H1 (cell line): ENCODE measurements at regions of chr1 and their contacts with region 1.

Region 1: GRCh38 chr1:232496175-232496574 is 133.8 kb downstream of the SIPA1L2 start:
- DNase-seq: no peak
- H3K4me3 ChIP-seq: no peak overlapping the region
- H3K27ac ChIP-seq: no peak overlapping the region
- H3K4me1 ChIP-seq: no peaks in the 10 kb centered on the region
- H3K27me3 ChIP-seq: no peaks in the 10 kb centered on the region
- CTCF ChIP-seq: no peak
- EP300 ChIP-seq: no peak
- POLR2A ChIP-seq: no peak
- RAD21 ChIP-seq: no peak

Region 2: GRCh38 chr1:232508130-232508701 is 12.0 kb after region 1 on chr1:
- CTCF ChIA-PET with region 1: interaction called, 23 read pairs
- POLR2A ChIA-PET with region 1: no interaction called
- DNase-seq: no peak
- H3K4me3 ChIP-seq: no peak overlapping the region
- H3K27ac ChIP-seq: no peak overlapping the region
- H3K4me1 ChIP-seq: peaks cover 0 to 6% (median 4%) of the 10 kb centered on the region in 4 experiments; a peak in 4 of 7 replicates
- H3K27me3 ChIP-seq: no peaks in the 10 kb centered on the region
- CTCF ChIP-seq: peak in 2 of 3 experiments; percentile 37 to 40; a peak in 3 of 4 replicates
- EP300 ChIP-seq: no peak
- POLR2A ChIP-seq: no peak
- RAD21 ChIP-seq: peak in 1 of 2 experiments; percentile 31; a peak in 2 of 4 replicates